ENCODE measurements at regions of chr2 and their contacts with region 1.

Region 1: GRCh38 chr2:112794131-112794733 is 9.9 kb upstream of the IL1A start:
- DNase-seq: peak; percentile 98
- H3K4me3 ChIP-seq: no peak overlapping the region
- H3K27ac ChIP-seq: peak overlapping the region; percentile 99
- H3K4me1 ChIP-seq: peaks cover 38% of the 10 kb centered on the region
- H3K27me3 ChIP-seq: no peaks in the 10 kb centered on the region
- CTCF ChIP-seq: no peak

Region 2: DNA sequence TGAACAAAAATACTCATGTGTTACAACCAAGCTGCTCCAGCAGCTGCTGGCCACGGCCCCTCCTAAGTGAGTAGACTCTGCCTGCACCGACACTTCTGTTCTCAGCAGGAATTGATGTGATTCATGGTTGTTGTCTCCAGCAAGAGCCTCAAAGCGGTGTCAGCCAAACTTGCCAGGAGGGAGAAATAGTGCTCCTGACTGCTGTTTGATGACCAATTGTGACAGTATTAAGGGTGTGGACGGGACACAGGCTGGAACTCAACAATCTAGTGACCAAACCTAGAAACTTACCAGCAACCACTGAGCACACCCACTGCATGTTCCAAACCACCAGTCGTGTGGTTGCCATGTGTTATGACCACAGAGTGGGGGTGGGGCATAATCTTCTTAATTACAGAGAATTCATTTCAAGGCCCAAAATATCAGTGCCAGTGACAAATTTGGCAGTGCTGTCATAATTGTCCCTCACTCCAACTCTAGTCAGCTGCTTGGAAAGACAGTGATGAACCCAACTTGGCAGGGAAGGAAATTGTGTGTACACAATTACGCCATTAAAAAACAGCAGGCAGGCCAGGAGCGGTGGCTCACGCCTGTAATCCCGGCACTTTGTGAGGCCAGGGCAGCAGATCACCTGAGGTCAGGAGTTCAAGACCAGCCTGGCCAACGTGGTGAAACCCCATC is 625.7 kb before region 1 on chr2:
- CTCF ChIA-PET with region 1: no interaction called
- dilution Hi-C with region 1: no loop called
- in situ Hi-C with region 1: no loop called
- intact Hi-C with region 1: no loop called
- DNase-seq: peak; percentile 31
- H3K4me3 ChIP-seq: no peak overlapping the region
- H3K27ac ChIP-seq: no peak overlapping the region
- H3K4me1 ChIP-seq: no peaks in the 10 kb centered on the region
- H3K27me3 ChIP-seq: no peaks in the 10 kb centered on the region
- CTCF ChIP-seq: no peak

Region 3: GRCh38 chr2:112584134-112584890 is 209.9 kb before region 1 on chr2 and contains the start of gene CHCHD5:
- CTCF ChIA-PET with region 1: no interaction called
- dilution Hi-C with region 1: no loop called
- in situ Hi-C with region 1: no loop called
- intact Hi-C with region 1: loop called (anchors 1 kb)
- DNase-seq: peak; percentile 97
- H3K4me3 ChIP-seq: peak within 1 kb of the TSS; percentile 67 to 85 (median 72)
- H3K27ac ChIP-seq: peak within 1 kb of the TSS; percentile 98
- H3K4me1 ChIP-seq: peaks cover 21% of the 10 kb centered on the region
- H3K27me3 ChIP-seq: no peaks in the 10 kb centered on the region
- CTCF ChIP-seq: peak in 1 of 2 donors; percentile 16
- total RNA-seq, gene CHCHD5: 10.2 to 42.6 TPM

Region 4: DNA sequence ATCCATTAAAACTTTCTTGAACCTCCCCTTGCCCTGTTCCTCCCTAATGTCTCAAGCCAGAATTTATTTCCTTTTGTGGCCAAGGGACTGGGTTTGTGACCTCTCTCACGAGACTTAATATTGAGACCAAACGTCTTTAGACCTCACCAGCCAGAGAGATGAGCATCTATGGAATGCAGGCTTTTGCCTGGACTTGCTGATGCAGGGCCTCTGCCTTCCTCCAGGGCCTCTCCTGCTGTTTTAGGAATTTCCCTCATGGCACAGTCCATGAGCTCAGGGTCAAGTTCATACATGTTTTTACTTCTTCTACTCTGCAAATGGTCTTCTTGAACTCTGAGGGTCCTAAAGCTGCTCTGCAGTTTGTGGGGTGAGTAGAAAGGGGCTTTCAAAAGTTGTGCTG is 20.0 kb after region 1 on chr2:
- CTCF ChIA-PET with region 1: no interaction called
- dilution Hi-C with region 1: no loop called
- in situ Hi-C with region 1: no loop called
- intact Hi-C with region 1: loop called (anchors 1 kb)
- DNase-seq: peak; percentile 93
- H3K4me3 ChIP-seq: no peak overlapping the region
- H3K27ac ChIP-seq: peak overlapping the region; percentile 91
- H3K4me1 ChIP-seq: peaks cover 53% of the 10 kb centered on the region
- H3K27me3 ChIP-seq: no peaks in the 10 kb centered on the region
- CTCF ChIP-seq: peak; percentile 4 to 27

Region 5: DNA sequence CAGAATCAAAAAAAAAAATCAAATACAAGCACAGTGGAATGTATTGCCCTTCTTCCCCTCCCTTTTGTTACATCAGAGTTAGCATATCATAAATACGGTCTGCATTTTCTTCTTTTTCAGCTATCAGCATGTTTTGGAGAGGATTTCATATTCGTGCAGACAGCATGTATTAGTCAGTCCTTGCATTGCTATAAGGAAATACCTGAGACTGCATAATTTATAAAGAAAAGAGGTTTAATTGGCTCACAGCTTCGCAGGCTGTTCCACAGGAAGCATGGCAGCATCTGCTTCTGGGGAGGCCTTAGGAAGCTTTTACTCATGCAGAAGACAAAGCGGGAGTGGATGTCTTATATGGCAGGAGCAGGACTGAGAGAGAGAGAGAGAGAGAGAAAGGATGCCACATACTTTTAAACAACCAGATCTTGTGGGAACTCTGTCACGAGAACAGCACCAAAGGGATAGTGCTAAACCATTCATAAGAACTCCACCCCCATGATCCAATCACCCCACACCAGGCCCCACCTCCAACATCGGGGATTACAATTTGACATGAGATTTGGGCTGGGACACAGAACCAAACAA is 33.5 kb after region 1 on chr2:
- CTCF ChIA-PET with region 1: no interaction called
- dilution Hi-C with region 1: no loop called
- in situ Hi-C with region 1: no loop called
- intact Hi-C with region 1: loop called (anchors 1 kb)
- DNase-seq: no peak
- H3K4me3 ChIP-seq: no peak overlapping the region
- H3K27ac ChIP-seq: no peak overlapping the region
- H3K4me1 ChIP-seq: peaks cover 18% of the 10 kb centered on the region
- H3K27me3 ChIP-seq: no peaks in the 10 kb centered on the region
- CTCF ChIP-seq: no peak

Region 6: DNA sequence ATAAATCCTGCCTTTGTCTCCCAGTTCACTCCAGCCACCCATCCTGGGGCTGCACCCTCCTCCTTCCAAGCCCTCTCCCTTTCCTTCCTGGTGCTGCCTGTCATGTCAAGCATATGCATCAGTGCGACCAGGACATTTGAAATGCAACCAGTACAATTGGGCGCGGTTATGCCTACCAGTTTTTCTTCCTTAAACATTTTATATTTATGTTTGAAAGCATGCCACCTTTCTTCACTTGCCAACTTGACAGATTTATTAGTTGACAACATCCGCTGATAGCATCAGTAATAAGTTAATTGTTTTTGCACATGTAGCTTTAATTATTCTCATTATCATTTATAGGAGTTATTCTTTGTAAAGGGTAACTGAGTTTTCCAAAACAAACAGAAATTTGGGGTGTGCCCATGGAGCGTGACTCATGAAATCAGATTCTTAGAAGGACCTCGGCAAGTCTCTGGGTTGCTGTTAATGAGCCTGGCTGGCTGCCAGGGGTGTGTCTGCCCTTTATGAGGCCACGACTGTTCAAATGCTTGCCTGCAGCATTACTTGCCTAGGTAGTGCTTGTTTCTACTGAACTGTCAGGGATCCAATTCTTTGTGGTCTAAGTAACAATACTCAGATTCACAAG is 75.1 kb after region 1 on chr2:
- CTCF ChIA-PET with region 1: no interaction called
- dilution Hi-C with region 1: no loop called
- in situ Hi-C with region 1: no loop called
- intact Hi-C with region 1: no loop called
- DNase-seq: peak; percentile 99
- H3K4me3 ChIP-seq: no peak overlapping the region
- H3K27ac ChIP-seq: peak overlapping the region; percentile 88
- H3K4me1 ChIP-seq: peaks cover 42% of the 10 kb centered on the region
- H3K27me3 ChIP-seq: no peaks in the 10 kb centered on the region
- CTCF ChIP-seq: no peak